Ascending aorta (tissue), 2 donors: ENCODE measurements at regions of chr5 and their contacts with region 1.

Region 1: DNA sequence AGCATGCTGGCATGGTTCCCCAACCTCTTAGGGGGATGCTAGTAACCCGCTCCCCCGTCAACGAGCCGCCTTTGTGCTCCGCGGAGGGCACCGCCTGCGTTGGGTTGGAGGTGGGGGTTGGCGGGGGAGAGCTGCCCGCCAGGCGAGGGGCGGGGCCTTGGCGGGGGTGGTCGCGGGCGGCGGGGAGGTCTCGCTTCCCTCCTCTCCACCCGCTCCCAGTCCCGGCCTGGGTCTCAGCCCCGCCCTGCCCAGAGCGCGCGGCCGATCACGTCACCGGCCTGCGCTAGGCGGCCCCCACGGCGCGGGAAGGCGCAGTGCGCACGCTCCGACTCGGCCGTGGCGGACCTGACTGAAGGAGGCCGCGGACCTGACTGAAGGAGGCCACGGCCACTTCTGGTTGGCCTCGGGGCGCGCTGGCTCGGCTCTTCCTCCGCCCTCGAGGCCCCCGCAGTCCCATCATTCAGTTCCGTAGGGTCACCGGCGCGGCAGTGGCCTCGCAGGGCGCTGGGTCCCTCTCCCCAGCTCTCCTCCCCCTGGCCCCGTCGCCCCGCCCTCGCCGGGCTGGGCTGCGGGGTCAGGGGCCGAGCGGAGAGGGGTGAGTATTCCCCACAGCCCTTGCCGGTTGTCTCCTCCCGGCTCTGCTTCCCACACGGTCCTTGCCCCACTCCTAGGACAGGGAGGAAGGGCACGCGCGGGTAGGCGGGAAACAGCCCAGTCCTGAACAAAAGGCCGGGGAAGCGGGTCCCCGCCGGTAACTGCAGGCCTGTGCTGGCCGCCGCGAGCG is at the start of gene ATG10:
- DNase-seq: peak; percentile 58 to 94
- H3K4me3 ChIP-seq: peak within 1 kb of the TSS; percentile 81 to 85
- H3K27ac ChIP-seq: peak within 1 kb of the TSS; percentile 96 to 100
- H3K4me1 ChIP-seq: no peaks in the 10 kb centered on the region
- H3K27me3 ChIP-seq: no peaks in the 10 kb centered on the region
- CTCF ChIP-seq: no peak
- total RNA-seq, gene ATG10: 8.4 TPM

Region 2: GRCh38 chr5:81233080-81233634 is 738.7 kb before region 1 on chr5 and contains the start of gene CKMT2:
- intact Hi-C with region 1: loop called (anchors 10 kb)
- DNase-seq: peak; percentile 71 to 90
- H3K4me3 ChIP-seq: peak within 1 kb of the TSS; percentile 55 to 70
- H3K27ac ChIP-seq: peak within 1 kb of the TSS; percentile 93 to 98
- H3K4me1 ChIP-seq: peaks cover 11 to 27% of the 10 kb centered on the region in 2 donors
- H3K27me3 ChIP-seq: no peaks in the 10 kb centered on the region
- CTCF ChIP-seq: no peak
- total RNA-seq, gene CKMT2: 0.43 TPM

Region 3: DNA sequence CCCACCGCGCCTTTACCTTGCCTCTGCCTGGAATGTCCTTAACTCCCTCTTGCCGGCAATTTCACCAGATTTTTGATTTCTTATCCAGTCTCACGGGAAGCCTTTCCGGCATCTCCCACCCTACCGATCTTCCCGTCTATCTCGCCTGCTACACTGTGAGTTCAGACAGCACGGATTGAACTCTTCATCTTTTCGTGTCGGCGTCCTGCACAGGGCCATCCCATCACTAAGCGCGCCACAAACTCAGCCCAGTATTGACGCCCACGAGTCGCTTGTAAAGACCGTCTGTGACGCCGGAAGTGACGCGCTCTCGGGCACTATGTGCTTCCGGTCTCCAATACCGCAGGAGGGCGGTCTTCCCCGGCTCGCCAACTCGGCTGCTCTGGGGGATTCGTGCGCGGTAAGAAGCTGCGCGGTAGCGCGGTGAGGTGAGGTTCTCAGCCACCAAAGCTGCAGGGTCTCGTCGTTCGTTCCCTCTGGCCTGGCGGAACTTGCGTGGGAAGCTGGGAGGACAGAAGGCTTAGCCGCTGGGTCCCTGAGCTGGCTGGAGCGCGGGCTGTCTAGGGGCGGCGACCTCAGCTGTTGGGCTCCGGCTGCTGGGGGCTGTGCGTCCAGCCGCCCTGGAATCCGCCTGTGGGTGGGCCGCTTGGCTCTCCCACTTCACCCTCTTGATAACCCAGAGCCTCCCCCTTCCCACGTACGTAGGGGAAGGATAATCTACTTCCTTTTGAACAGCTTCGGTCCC is 670.5 kb before region 1 on chr5 and contains the start of gene ZCCHC9:
- intact Hi-C with region 1: loop called (anchors 10 kb)
- DNase-seq: peak; percentile 74 to 96
- H3K4me3 ChIP-seq: peak within 1 kb of the TSS; percentile 77 to 96
- H3K27ac ChIP-seq: peak within 1 kb of the TSS; percentile 88 to 93
- H3K4me1 ChIP-seq: peaks cover 5 to 16% of the 10 kb centered on the region in 2 donors
- H3K27me3 ChIP-seq: no peaks in the 10 kb centered on the region
- CTCF ChIP-seq: peak in 2 of 3 experiments; percentile 17 to 19
- total RNA-seq, gene ZCCHC9: 10.5 TPM

Region 4: DNA sequence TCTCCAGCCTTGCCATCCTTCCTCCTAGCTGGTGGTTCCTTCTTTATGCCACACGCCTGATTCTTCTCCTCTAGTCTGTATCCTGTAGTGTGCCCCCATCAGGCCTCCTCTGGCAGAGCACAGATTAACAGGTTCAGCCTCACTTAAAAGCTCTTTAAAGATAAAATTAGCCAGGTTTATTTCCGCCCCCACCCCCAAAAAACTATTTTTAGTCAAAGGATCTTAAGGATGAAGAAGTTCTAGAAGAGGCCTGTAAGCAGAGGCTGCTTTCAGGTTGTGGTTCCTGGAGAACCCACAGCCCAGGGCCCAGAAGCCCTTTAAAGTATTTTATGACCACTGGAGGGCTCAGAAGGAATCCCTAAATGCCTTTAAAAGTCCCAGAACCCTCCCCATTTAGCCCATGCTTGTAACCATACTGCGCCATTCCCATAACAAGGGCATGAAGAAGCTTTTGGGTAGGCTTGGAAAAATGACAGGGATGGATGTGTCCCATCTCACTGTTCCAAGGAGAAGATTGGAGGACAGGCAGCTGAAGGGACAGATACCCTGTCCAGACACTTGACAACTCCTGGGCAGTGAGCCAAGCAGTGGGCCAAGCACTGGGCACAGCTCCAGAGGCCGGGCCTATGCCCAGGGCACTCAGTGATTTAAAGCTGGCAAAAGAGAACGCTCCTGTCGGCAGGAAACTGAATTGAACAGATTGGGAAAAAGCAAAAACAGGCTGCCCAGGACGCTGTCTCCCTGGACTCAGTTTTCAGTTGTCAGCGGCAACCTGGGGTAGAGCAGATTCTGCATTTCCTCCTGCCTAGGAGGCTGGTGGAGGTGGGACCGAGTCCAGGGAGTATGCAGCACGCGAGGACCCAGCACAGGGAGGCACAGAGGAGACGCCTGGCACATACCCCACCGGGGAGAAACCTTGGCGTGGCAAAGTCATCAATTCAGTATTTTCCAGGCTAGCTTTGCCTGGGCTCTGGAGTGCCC is 114.7 kb before region 1 on chr5:
- intact Hi-C with region 1: loop called (anchors 1 kb)
- DNase-seq: peak in 1 of 2 donors; percentile 85
- H3K4me3 ChIP-seq: peak overlapping the region in 1 of 2 donors; percentile 38
- H3K27ac ChIP-seq: peak overlapping the region; percentile 71 to 90
- H3K4me1 ChIP-seq: peaks cover 5 to 17% of the 10 kb centered on the region in 2 donors
- H3K27me3 ChIP-seq: no peaks in the 10 kb centered on the region
- CTCF ChIP-seq: peak in 2 of 3 experiments; percentile 20 to 30

Region 5: DNA sequence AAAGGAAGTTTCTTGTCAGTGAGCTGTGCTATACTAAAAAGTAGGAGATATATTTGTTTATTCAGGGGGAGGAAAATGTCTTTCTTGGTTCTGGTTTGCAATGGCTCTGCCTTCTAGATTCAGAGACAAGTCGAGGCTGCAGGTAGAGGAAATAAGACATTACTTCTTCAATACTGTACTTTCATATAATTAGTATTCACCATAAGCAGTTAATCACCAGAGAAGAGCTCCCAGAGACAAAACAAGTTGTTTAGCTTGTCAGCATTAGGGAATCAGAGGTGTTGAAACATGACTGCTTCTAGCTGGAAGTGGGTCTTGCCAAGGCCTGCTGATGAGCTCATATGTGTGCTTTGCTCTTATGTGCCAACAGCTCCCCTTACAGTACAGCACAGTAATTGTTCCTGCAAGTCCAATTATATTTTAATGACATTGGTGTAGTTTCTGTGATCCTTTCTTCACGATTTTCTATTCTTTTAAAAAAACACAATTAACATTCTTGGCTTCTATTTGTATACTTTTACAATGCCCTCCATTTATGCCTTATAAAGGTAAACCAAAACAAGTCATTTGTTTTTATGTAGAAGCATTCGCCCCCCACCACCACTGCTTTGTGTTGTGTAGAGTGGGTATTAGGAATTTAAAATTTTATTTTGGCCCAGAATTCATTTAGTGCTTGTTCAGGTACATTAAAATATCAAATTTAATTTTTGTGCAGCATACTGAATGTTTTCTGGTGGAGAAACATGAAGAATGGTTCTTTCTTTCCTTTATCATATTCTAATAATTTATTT is 194.0 kb after region 1 on chr5:
- intact Hi-C with region 1: loop called (anchors 2 kb)
- DNase-seq: peak in 1 of 2 donors; percentile 83
- H3K4me3 ChIP-seq: no peak overlapping the region
- H3K27ac ChIP-seq: peak overlapping the region; percentile 0 to 36
- H3K4me1 ChIP-seq: peaks cover 2 to 9% of the 10 kb centered on the region in 2 donors
- H3K27me3 ChIP-seq: no peaks in the 10 kb centered on the region
- CTCF ChIP-seq: peak; percentile 65 to 75 (median 73)

Region 6: GRCh38 chr5:82278095-82278918 is 306.4 kb after region 1 on chr5 and contains the start of gene RPS23:
- intact Hi-C with region 1: loop called (anchors 2 kb)
- DNase-seq: peak; percentile 60 to 93
- H3K4me3 ChIP-seq: peak within 1 kb of the TSS; percentile 74 to 90
- H3K27ac ChIP-seq: peak within 1 kb of the TSS; percentile 78
- H3K4me1 ChIP-seq: peaks cover 0 to 19% of the 10 kb centered on the region in 2 donors
- H3K27me3 ChIP-seq: no peaks in the 10 kb centered on the region
- CTCF ChIP-seq: no peak
- total RNA-seq, gene RPS23: 1,118 TPM